Dorsolateral prefrontal cortex (tissue), 120 donors: ENCODE measurements at regions of chr1 and their contacts with region 1.

Region 1: DNA sequence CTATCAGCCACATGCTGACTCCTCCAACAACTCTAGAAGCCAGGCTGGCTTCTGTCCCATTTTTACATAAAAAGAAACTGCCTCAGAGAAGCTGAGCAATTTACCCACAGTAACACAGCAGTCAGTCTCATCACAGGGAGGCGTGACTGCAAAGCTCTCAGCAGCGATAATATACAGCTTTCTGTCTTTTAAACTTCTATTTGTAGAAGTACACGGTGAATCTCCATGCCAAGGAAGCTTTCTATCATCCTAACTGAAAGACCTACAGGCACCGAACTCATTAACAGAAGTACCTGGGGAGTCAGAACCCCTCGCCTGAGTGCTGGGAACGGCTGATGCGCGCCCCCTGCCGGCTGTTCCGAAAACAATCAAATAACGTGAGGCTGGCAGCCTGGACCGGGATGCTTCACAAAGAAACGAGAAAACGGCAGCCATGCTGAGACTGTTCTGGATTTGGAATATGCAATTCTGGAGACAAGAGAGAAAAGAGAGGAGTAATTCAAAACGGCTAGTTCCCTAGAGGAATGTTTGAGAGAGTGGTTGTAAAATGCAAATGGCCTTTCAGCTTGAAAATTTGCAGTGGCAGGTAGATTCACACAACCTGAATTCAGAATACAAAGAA is 43.5 kb upstream of the RAB4A start:
- DNase-seq: peak; percentile 77 to 93 (median 90)
- H3K4me3 ChIP-seq: peak overlapping the region in 5 of 59 donors; percentile 2 to 33 (median 8)
- H3K27ac ChIP-seq: peak overlapping the region in 58 of 59 donors; percentile 13 to 100 (median 98)
- H3K27me3 ChIP-seq: no peaks in the 10 kb centered on the region
- CTCF ChIP-seq: peak; percentile 63 to 97 (median 92)

Region 2: DNA sequence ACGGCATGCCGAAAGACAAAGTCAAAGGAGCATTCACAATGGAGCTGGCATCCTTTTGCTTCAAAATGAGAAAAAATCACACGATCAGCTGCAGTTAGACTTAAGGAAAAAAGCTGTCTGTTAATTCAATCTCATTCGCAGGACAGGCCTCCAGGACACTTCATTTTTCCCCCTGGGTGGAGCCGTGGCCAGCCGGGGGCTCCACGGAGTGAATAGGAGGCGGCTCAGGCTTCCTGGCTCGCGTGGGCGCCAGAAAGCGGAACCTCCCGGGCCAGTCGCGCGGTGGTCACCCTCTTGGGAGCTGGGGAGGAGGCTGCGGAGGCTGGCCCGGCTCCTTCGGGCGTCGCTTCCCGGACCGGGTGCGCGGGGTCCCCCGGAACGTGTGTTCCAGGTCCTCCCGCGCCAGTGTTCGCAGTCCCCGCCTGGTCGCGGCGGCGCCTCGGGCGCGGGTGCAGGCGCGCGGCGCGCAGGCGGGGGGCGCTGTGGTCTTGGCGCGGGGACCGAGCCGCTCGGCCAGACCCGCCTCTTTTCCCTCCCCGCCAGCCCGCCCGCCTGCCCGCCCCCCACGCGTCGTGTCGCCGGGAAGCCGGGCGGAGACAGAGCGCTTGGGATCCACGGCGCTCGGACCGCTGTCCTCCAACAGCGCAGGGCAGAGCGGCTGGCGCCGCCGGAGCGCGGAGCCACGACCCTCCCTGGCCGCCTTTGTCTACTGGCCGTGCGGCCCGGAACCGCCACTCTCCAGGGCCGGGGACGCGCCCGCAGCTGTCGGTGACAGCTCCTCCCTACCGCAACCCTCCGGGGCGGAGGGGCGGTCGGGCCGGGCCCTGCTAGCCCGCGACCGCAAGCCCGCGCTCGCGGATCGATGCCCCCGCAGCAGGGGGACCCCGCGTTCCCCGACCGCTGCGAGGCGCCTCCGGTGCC is 492.3 kb before region 1 on chr1 and contains the start of gene RHOU:
- intact Hi-C with region 1: loop called (anchors 1 kb)
- DNase-seq: peak; percentile 47 to 90 (median 74)
- H3K4me3 ChIP-seq: peak within 1 kb of the TSS; percentile 55 to 98 (median 85)
- H3K27ac ChIP-seq: peak within 1 kb of the TSS; percentile 77 to 99 (median 95)
- H3K27me3 ChIP-seq: no peaks in the 10 kb centered on the region
- CTCF ChIP-seq: peak in 55 of 56 donors; percentile 1 to 99 (median 84)
- total RNA-seq, gene RHOU: 15.0 to 156 (median 44.0) TPM

Region 3: DNA sequence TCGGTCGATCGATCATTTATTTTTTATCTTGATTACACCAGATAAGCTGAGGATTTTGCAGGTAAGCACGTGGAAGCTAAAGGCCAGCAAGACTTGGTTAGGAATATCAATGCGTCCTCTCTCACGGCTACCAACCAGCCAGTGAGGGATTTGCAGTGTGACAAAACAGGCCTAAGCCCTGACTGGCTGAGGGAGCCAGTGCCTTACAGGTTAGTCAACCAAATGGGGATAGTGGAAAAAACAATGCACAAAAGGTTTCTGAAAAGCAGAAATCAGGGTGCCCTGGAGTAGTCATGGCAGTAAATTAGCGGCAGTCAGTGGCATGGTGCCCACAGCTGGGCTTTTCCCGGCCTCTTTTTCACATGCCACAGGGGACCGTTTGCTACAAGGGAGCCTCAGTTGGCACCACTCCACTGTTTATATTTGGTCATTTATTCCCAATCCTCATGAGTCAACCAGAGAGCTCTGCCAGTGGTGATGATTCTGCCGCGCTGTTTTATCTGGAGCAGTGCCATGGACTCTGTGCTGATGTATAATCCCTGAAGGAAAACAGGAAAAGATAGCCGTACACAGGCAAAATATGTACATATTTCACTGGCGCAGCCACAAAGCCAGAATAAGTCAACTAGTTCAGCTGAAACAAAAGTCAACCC is 324.5 kb before region 1 on chr1:
- intact Hi-C with region 1: loop called (anchors 10 kb)
- DNase-seq: peak; percentile 10 to 90 (median 76)
- H3K4me3 ChIP-seq: peak overlapping the region in 14 of 59 donors; percentile 4 to 31 (median 15)
- H3K27ac ChIP-seq: peak overlapping the region in 57 of 59 donors; percentile 12 to 93 (median 81)
- H3K27me3 ChIP-seq: no peaks in the 10 kb centered on the region
- CTCF ChIP-seq: peak in 7 of 56 donors; percentile 6 to 24 (median 13)

Region 4: DNA sequence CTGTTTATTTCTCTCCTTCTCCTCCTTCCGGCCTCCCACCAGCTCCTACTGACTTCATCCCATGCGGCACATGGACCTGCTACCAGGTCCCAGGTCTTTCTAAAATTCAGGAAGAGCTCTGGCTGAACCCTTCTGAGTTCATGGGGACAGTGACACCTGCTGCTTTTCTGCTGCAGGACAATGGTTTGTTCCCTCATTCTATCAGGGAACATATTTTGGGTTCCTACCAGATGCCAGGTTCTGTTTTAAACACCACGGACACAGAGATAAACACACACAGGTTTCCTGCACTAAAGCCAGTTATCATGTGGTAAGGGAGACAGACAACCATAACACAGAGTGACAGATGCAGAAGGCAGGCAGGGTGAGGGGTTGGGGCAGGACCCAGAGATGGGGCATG is 70.5 kb before region 1 on chr1:
- intact Hi-C with region 1: loop called (anchors 10 kb)
- DNase-seq: no peak
- H3K4me3 ChIP-seq: no peak overlapping the region
- H3K27ac ChIP-seq: peak overlapping the region in 2 of 59 donors; percentile 13 to 36
- H3K27me3 ChIP-seq: no peaks in the 10 kb centered on the region
- CTCF ChIP-seq: peak in 49 of 56 donors; percentile 17 to 74 (median 43)

Region 5: DNA sequence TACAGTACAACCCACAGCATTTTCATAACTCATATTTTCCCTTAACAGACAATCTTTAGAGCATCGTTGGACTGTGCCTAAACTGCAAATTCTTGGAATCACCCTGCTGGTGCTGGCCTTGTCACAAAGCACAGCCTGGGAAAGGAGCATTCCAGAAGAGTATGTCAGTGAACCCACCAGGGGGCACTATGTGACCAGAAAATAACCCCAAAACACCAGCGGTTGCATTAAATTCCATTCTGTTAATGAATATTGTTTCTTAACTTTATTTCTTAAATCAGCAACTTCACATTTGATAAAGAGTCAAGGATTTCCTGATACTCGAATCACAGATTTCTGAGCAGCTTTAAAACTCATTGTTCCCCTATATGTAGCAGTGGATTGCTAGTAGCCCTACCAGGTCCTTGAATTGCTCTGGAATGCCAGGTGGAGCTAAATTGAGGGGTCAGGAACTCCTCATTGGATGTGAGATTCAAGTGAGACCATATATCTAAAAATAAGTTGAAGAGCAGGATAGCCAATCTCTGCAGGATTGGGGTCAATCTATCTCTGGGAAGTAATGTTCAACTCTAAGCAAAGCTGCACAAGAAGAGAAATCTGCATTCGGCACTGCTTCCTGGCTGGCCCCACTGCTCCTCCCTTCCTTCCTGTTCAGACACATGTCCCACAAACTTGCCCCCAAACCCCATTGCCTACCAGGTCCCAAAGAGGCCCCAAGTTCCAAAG is 30.8 kb after region 1 on chr1:
- intact Hi-C with region 1: loop called in 1 of 2 experiments (anchors 1 kb)
- DNase-seq: peak in 8 of 10 donors; percentile 55 to 80 (median 70)
- H3K4me3 ChIP-seq: peak overlapping the region in 3 of 59 donors; percentile 11 to 21 (median 13)
- H3K27ac ChIP-seq: peak overlapping the region in 55 of 59 donors; percentile 6 to 89 (median 72)
- H3K27me3 ChIP-seq: no peaks in the 10 kb centered on the region
- CTCF ChIP-seq: peak; percentile 69 to 99 (median 93)

Region 6: DNA sequence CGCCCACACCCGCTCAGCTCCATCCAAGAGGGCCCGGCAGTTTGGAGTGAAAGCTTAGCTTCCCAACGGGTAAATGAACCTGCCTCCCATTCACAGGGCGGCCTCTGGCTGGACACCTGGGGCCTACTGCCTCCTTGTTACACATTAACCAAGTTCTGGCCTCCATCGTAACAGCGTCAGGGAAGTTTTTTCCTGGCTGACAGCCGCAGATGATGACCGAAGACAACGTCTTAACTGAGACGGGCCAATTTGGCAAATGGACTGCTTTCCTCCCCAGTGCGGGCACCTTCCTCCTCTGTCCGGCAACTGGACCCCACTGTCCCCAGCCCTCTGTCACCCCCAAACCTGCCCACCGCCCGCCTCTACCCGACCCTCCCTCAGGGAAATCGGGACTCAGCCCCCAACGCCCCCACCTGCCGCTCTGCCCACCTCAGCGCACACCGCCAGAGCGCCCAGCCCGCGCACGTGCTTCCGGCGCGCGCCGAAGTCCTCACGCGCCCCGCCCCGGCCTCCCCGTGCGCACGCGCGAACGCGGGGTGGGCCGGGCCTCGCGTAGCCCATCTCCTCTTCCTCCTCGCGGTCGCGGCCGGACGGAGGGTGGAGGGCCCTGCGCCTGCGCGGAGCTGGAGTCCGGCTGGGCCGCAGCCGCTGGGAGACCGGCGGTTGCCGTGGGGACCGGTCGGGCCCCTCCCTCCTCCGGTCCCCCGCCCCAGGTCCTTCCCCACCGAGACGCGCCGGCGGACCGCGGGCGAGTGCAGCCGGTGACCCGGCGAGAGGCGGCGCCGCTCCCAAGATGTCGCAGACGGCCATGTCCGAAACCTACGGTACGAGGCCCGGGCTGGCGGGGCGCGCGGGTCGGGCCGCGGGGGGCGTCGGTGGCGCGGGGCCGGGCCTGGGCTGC is 43.4 kb after region 1 on chr1 and contains the start of gene RAB4A:
- intact Hi-C with region 1: no loop called
- DNase-seq: peak; percentile 60 to 91 (median 80)
- H3K4me3 ChIP-seq: peak within 1 kb of the TSS; percentile 60 to 94 (median 80)
- H3K27ac ChIP-seq: peak within 1 kb of the TSS in 58 of 59 donors; percentile 6 to 93 (median 82)
- H3K27me3 ChIP-seq: no peaks in the 10 kb centered on the region
- CTCF ChIP-seq: peak in 5 of 56 donors; percentile 6 to 46 (median 12)
- total RNA-seq, gene RAB4A: 64.3 to 117 (median 86.8) TPM